AG04449 (cell line): ENCODE measurements at regions of chr11 and their contacts with region 1.

Region 1: GRCh38 chr11:100681064-100681502 is 6.0 kb upstream of the ARHGAP42 start:
- DNase-seq: no peak
- H3K4me3 ChIP-seq: no peak overlapping the region
- CTCF ChIP-seq: no peak

Region 2: DNA sequence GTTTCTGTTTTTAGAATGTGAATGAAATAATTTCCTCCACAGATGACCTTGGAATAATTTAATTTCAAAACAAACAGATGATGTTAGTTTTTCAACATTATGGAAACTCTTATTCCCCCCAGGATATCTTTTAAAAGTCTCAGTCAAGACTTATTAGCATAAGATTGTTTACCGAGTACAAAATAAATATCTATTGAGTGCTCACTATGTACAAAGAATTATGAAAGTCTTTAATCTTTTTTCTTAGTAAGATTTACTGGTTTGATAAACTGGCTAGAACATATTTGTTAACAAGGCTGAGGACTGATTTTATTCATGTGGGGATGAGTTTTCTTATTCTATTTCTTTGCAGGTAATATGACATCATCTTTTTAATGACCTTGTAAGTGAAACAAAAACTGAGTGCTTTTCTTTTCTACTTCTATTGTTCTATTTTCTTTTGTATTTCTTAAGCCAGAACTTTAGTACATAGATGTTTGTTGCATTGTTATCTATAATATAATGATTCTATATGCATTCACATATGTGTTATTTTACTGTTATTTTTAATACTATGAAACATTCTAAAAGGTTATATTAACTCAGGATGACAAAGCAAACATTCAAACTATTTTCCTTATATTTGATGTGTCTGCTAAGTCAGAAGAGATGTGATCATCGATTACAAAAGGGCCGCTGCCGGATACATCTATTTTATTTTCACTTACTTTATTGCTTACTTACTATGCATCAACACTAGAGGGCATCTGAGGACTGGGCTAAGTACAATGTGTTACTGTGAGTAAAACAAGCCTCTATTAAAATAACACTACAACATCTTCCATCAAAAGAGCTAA is 105.0 kb before region 1 on chr11:
- CTCF ChIA-PET with region 1: interaction called, 45 read pairs
- POLR2A ChIA-PET with region 1: no interaction called
- DNase-seq: no peak
- H3K4me3 ChIP-seq: no peak overlapping the region
- CTCF ChIP-seq: peak; percentile 62

Region 3: GRCh38 chr11:100667449-100667848 is 13.6 kb before region 1 on chr11:
- CTCF ChIA-PET with region 1: interaction called, 10 read pairs
- POLR2A ChIA-PET with region 1: no interaction called
- DNase-seq: no peak
- H3K4me3 ChIP-seq: no peak overlapping the region
- CTCF ChIP-seq: no peak

Region 4: DNA sequence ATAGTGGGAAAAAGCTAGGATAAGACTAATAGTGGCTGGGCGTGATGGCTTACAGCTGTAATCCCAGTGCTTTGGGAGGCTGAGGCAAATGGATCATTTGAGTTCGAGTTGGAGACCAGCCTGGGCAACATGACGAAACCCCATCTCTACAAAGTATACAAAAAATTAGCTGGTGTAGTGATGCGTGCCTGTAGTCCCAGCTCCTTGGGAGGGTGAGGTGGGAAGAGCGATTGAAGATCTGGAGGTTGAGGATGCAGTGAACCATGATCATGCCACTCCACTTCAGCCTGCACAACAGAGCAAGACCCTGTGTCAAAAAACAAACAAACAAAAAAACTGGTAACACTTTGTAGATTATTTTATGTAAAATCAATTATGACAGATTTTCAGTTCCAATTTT is 14.8 kb after region 1 on chr11:
- CTCF ChIA-PET with region 1: interaction called, 18 read pairs
- POLR2A ChIA-PET with region 1: no interaction called
- DNase-seq: no peak
- H3K4me3 ChIP-seq: no peak overlapping the region
- CTCF ChIP-seq: no peak

Region 5: DNA sequence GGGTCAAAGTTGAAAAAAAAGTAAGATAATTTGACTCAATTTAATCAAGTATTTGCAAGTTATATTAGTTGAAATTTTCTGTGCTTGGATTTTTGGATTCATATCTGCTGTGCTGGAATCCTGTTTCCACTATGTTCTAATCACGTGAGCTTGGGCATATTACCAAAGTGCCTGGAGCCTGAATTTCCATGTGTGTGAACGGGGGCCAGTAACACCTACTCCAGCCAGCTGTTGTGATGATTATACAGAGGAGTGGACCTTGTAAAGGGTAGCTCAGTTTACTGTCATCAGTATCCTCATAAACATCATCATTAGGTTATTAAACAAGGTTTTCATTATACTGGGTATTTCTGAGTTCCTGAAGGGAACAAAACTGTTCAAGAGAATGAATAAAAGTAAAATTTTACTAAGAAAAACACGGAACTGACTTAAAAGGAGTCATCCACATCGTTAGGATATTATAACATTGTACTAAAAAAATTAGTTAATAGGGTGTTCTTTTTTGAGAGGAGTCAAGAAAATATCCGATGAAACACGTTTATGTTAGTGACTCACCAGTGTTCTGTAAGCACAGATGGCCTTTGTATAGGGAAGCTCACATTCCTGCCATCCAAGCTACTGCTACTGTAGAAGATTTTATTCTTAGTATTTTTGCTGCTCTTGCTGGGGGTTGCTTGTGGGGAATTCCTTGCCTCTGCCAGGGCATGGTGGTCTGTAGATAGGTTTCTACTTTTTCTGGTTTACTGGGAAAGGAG is 150.1 kb after region 1 on chr11:
- CTCF ChIA-PET with region 1: interaction called, 11 read pairs
- POLR2A ChIA-PET with region 1: no interaction called
- DNase-seq: peak; percentile 21
- H3K4me3 ChIP-seq: no peak overlapping the region
- CTCF ChIP-seq: no peak

Region 6: DNA sequence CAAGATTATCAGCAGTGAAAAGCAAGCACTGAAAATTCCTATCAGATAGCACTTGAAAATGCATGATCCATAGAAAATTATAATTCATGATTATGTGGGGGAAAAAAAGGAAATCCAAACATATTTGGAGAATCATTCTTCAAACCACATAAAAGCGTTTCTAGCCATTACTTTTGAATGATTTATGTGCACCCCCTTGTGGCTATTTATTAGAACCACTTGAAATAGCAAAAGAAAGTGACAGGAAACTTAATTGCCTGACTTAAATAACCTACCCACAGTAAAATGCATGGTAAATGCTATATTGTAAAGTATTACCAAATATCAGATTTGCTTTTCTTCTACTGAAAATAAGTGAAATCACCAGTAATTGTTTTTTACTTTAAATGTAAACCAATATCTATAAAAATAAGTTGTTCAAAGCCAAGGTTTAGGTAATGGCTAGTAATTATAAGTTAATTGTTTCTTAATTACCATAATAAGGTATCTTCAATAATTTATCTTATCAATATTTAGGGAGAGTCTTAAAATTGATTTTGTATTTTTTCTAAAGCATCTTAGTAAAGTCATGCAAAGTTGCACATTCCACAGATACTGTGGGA is 174.5 kb after region 1 on chr11:
- CTCF ChIA-PET with region 1: interaction called, 20 read pairs
- POLR2A ChIA-PET with region 1: no interaction called
- DNase-seq: no peak
- H3K4me3 ChIP-seq: no peak overlapping the region
- CTCF ChIP-seq: peak; percentile 6

Region 7: DNA sequence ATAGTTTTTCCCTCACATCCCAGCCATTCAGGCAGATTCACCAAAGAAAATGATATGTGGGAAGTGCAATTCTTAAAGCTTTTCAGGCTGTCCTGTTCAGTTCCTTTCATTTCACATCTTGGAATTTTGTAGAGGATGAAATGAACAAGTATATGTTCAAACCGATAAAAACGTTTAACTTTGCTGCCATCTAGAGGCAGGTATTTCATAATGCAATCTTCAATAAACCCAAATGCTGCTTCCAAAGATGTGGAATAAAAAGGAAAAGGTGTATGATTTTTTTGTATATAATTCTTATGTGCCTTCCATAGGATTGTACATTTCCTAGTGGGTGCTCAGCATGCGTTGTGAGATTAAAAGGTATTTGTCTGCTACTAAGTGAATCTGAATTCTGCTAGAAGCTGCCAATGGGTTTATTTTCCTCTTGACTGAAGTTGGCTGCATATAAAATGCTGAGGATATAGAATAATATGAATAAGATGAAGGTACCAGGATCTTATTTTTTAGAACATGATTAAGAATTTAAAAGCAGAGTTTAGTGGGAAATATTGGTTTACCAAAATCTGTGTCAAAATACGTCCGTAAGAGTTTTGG is 249.2 kb after region 1 on chr11:
- CTCF ChIA-PET with region 1: interaction called, 133 read pairs
- POLR2A ChIA-PET with region 1: no interaction called
- DNase-seq: peak; percentile 29
- H3K4me3 ChIP-seq: no peak overlapping the region
- CTCF ChIP-seq: no peak